Right cardiac atrium (tissue), 5 donors: ENCODE measurements at regions of chr1 and their contacts with region 1.

Region 1: DNA sequence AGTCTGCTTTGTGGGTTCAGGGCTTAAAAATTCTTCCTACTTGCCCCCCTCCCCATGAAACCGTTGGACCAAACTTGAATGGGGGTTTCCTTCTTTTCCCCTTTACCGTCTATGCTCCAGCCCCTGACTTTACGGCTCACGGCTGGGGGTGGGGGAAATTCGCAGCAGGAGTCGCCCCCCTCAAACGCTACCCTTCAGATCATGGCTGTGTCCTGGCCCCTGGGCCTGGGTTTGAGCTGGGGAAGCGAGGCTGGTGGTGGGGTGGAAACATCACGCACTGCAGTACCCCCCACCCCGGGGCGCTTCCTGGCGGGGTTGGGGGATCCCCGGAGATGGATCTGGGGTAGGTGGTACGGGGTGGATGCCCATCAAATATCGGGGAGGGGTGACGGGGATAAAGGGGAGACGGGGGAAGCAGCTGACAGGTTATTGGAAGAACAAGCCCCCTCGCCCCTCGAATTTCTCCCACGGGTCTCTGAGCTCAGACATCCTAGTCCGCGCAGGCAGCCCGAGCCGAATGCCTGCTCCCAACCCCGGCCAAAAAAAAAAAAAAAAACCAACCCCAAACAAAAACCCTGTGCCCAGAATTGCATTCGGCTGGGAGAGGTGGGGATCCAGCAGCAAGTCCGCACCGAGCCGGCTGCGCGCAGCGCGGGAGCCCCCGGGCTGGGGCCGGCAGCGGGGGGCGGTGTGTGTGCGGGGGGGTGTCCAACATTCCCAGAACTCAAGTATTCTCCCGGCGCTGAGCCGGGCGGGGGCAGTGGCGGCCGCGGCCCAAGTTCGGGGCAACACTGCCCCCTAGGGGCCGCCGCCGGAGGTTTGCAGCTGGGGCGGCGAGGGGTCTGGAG is 59.0 kb upstream of the ACOT11 start:
- DNase-seq: peak; percentile 80 to 94 (median 93)
- ATAC-seq: peak; percentile 79 to 86
- H3K4me3 ChIP-seq: peak overlapping the region; percentile 79
- H3K27ac ChIP-seq: peak overlapping the region; percentile 92
- H3K4me1 ChIP-seq: peaks cover 2% of the 10 kb centered on the region
- H3K27me3 ChIP-seq: no peaks in the 10 kb centered on the region

Region 2: GRCh38 chr1:54070171-54070837 is 418.7 kb before region 1 on chr1:
- intact Hi-C with region 1: loop called in 2 of 4 experiments (anchors 5 kb)
- DNase-seq: no peak
- ATAC-seq: peak in 1 of 2 donors; percentile 49
- H3K4me3 ChIP-seq: no peak overlapping the region
- H3K27ac ChIP-seq: no peak overlapping the region
- H3K4me1 ChIP-seq: no peaks in the 10 kb centered on the region
- H3K27me3 ChIP-seq: no peaks in the 10 kb centered on the region

Region 3: DNA sequence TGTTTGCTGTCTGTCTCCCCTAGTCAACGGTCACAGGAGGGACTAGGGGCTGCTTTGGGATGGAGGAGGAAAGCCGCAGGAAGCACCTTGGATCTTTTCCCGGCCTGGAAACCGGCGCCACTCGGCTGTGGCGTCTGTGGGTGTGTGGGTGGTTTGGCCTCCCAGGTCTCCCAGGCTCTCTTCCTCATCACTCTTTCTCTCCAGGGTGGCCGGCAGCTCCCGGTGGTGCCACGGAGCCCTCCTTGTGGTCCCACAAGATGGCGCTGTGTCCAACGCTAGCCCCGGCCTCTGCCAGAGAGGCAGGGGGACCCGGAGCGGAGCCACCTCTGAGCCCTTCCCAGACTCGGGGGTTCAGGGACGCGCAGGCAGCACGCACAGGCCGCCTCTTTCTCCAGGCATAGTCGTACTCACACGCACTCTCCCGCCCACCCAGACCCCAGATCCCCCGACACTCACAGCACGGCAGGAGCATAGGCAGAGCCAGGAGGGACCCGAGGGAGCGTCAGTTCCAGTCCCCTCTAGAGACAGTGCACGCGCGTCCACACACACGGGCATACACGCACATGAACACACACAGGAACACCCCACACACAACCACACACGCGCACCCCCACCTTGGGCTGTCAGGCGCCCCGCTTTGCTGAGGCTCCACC is 367.4 kb before region 1 on chr1:
- intact Hi-C with region 1: loop called (anchors 2 to 10 kb)
- DNase-seq: peak; percentile 84 to 91 (median 90)
- ATAC-seq: peak; percentile 90 to 91
- H3K4me3 ChIP-seq: peak overlapping the region; percentile 13
- H3K27ac ChIP-seq: no peak overlapping the region
- H3K4me1 ChIP-seq: no peaks in the 10 kb centered on the region
- H3K27me3 ChIP-seq: no peaks in the 10 kb centered on the region

Region 4: GRCh38 chr1:54259546-54260140 is 229.4 kb before region 1 on chr1:
- intact Hi-C with region 1: no loop called
- DNase-seq: no peak
- ATAC-seq: no peak
- H3K4me3 ChIP-seq: no peak overlapping the region
- H3K27ac ChIP-seq: no peak overlapping the region
- H3K4me1 ChIP-seq: no peaks in the 10 kb centered on the region
- H3K27me3 ChIP-seq: no peaks in the 10 kb centered on the region

Region 5: GRCh38 chr1:54273092-54273794 is 215.8 kb before region 1 on chr1:
- intact Hi-C with region 1: loop called in 1 of 4 experiments (anchors 10 kb)
- DNase-seq: peak; percentile 79 to 86 (median 79)
- ATAC-seq: peak; percentile 53 to 76
- H3K4me3 ChIP-seq: no peak overlapping the region
- H3K27ac ChIP-seq: peak overlapping the region; percentile 81
- H3K4me1 ChIP-seq: peaks cover 43% of the 10 kb centered on the region
- H3K27me3 ChIP-seq: no peaks in the 10 kb centered on the region

Region 6: GRCh38 chr1:54310439-54311328 is 178.3 kb before region 1 on chr1:
- intact Hi-C with region 1: loop called in 1 of 4 experiments (anchors 10 kb)
- DNase-seq: peak; percentile 47 to 78 (median 76)
- ATAC-seq: peak in 1 of 2 donors; percentile 47
- H3K4me3 ChIP-seq: no peak overlapping the region
- H3K27ac ChIP-seq: no peak overlapping the region
- H3K4me1 ChIP-seq: peaks cover 15% of the 10 kb centered on the region
- H3K27me3 ChIP-seq: no peaks in the 10 kb centered on the region

Region 7: DNA sequence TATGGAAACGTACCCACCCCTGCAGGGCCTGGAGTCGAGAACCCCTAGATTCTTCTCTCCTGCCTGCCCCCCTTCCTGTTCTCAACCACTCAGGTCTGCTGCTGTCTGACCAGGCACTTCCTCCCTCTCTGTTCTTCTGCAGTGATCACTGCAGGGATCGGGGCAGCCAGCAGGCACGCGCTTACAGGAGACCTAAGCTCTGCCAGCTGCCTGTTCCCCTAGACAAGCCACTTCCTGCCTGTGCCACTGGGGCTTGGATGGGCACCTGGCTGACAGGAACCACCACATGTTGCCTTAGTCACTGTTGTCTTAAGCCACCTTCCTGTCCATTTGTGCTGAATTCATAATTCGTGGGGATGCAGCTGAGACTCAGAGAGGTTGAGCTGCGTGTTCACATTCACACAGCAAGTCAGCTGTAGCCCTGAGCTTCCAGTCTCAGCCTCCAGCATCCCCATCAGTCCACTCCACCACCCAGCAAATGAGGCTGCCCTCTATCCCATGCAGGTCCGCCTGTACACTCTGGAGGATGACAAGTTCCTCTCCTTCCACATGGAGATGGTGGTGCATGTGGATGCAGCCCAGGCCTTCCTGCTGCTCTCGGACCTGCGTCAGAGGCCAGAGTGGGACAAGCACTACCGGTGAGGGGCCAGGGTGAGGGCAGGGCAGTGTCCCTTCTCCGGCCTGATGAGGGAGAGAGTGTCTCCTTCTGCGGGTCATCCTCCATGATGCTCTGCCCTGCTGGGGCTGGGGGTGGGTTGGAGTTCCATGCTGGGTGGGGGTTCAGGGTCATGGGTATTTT is 115.8 kb after region 1 on chr1:
- intact Hi-C with region 1: no loop called
- DNase-seq: peak in 1 of 3 donors; percentile 25
- ATAC-seq: no peak
- H3K4me3 ChIP-seq: no peak overlapping the region
- H3K27ac ChIP-seq: no peak overlapping the region
- H3K4me1 ChIP-seq: no peaks in the 10 kb centered on the region
- H3K27me3 ChIP-seq: no peaks in the 10 kb centered on the region

Region 8: DNA sequence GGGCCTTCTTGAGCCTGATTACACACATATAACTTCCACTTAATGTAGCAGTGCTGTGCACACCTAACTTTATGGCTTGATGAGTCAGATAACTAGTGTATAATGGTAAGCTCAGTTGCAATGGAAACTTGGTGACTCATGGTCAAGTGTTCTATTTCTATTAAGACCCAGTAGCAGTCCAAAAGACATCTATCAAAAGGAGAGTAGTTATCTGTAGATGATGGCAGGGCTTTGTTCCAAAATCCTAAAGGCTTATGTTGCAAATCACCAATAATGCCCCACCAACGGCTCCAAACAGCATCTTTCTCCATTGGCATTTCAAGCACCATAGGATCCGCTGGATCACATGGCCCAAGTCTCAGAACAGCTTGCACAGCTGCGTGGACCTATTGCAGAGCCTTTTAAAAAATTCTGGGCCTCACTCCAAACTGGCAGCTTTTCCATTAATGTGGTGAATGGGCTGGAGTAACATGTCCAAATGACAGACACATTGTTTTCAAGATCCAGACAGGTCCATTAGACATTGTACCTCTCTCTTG is 1293.0 kb after region 1 on chr1:
- intact Hi-C with region 1: no loop called
- DNase-seq: peak in 1 of 3 donors; percentile 50
- ATAC-seq: peak; percentile 26 to 75
- H3K4me3 ChIP-seq: no peak overlapping the region
- H3K27ac ChIP-seq: no peak overlapping the region
- H3K4me1 ChIP-seq: no peaks in the 10 kb centered on the region
- H3K27me3 ChIP-seq: no peaks in the 10 kb centered on the region